Activated B cell treated with CpG ODN at 0.5 μM for 24 hours (primary cell): ENCODE measurements at regions of chr7 and their contacts with region 1.

Region 1: GRCh38 chr7:106870983-106871410 is 5.9 kb downstream of the PIK3CG start:
- DNase-seq: no peak
- ATAC-seq: peak; percentile 77
- H3K4me3 Mint-ChIP-seq: peak overlapping the region; percentile 74
- H3K27ac Mint-ChIP-seq: peak overlapping the region; percentile 86
- H3K4me1 Mint-ChIP-seq: peaks cover 77% of the 10 kb centered on the region
- H3K27me3 Mint-ChIP-seq: no peaks in the 10 kb centered on the region
- CTCF ChIP-seq: no peak

Region 2: GRCh38 chr7:106717955-106718871 is 152.8 kb before region 1 on chr7:
- CTCF ChIA-PET with region 1: no interaction called
- POLR2A ChIA-PET with region 1: interaction called, 3 read pairs
- intact Hi-C with region 1: loop called (anchors 5 kb)
- DNase-seq: no peak
- ATAC-seq: peak; percentile 88
- H3K4me3 Mint-ChIP-seq: no peak overlapping the region
- H3K27ac Mint-ChIP-seq: no peak overlapping the region
- H3K4me1 Mint-ChIP-seq: peaks cover 12% of the 10 kb centered on the region
- H3K27me3 Mint-ChIP-seq: no peaks in the 10 kb centered on the region
- CTCF ChIP-seq: no peak

Region 3: DNA sequence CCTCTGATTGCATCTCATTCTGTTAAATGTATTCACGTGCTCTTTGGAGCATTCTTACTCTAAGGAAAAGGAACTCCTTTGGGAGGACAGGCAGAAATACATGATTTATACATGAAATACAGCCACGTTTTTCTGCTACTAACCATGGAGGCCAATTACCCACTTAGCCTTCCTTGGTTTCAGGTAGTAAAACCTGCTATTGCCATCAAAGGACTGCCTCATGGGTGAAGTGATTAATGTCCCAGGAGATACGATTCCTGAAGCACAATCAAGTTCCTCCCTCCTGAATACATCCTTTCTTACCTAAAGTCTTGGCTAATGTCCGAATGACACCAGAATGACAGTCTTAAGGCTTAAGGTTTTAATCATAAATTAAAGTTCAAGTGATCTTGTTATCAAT is 64.4 kb before region 1 on chr7:
- CTCF ChIA-PET with region 1: no interaction called
- POLR2A ChIA-PET with region 1: no interaction called
- intact Hi-C with region 1: no loop called
- DNase-seq: no peak
- ATAC-seq: no peak
- H3K4me3 Mint-ChIP-seq: no peak overlapping the region
- H3K27ac Mint-ChIP-seq: no peak overlapping the region
- H3K4me1 Mint-ChIP-seq: peaks cover 4% of the 10 kb centered on the region
- H3K27me3 Mint-ChIP-seq: no peaks in the 10 kb centered on the region
- CTCF ChIP-seq: no peak

Region 4: GRCh38 chr7:106855540-106856132 is 15.4 kb before region 1 on chr7:
- CTCF ChIA-PET with region 1: no interaction called
- POLR2A ChIA-PET with region 1: interaction called, 8 read pairs
- intact Hi-C with region 1: loop called (anchors 2 kb)
- DNase-seq: no peak
- ATAC-seq: peak; percentile 89
- H3K4me3 Mint-ChIP-seq: no peak overlapping the region
- H3K27ac Mint-ChIP-seq: peak overlapping the region; percentile 6
- H3K4me1 Mint-ChIP-seq: peaks cover 10% of the 10 kb centered on the region
- H3K27me3 Mint-ChIP-seq: no peaks in the 10 kb centered on the region
- CTCF ChIP-seq: no peak

Region 5: GRCh38 chr7:106883456-106884026 is 12.5 kb after region 1 on chr7:
- CTCF ChIA-PET with region 1: interaction called, 3 read pairs
- POLR2A ChIA-PET with region 1: interaction called, 14 read pairs
- intact Hi-C with region 1: loop called (anchors 1 kb)
- DNase-seq: no peak
- ATAC-seq: peak; percentile 95
- H3K4me3 Mint-ChIP-seq: peak overlapping the region; percentile 58
- H3K27ac Mint-ChIP-seq: peak overlapping the region; percentile 61
- H3K4me1 Mint-ChIP-seq: peaks cover 45% of the 10 kb centered on the region
- H3K27me3 Mint-ChIP-seq: no peaks in the 10 kb centered on the region
- CTCF ChIP-seq: no peak

Region 6: DNA sequence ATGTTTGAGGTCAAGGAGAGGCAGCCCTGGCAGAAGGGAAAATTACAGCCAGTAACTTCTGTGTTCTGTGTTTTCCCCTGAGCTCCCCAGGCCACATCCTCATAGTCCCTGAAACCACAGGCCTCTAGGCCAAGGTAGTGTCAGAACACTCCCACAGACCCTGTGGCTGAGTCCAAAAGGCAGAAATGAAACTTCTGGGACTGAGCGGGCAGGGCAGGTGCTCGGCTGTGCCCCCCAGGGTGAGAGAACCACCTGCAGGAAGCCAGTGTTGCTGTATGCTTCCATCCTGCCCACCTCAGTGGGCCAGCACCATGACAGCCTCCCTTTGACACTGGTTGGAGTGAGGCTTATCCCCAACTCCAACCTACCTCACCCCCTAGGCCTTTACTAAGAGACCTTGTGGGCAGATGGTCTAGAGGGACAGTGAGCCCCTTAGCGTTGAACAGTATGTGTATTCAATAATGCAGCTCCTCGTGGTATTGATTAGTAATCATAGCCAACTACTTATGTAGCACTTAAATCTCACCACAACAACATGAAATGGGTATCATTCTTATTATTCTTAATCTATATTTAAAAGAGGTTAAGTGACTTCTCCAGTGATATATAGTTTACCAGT is 24.4 kb after region 1 on chr7:
- CTCF ChIA-PET with region 1: no interaction called
- POLR2A ChIA-PET with region 1: interaction called, 15 read pairs
- intact Hi-C with region 1: loop called (anchors 1 kb)
- DNase-seq: peak; percentile 42
- ATAC-seq: peak; percentile 93
- H3K4me3 Mint-ChIP-seq: peak overlapping the region; percentile 46
- H3K27ac Mint-ChIP-seq: peak overlapping the region; percentile 82
- H3K4me1 Mint-ChIP-seq: peaks cover 77% of the 10 kb centered on the region
- H3K27me3 Mint-ChIP-seq: no peaks in the 10 kb centered on the region
- CTCF ChIP-seq: no peak

Region 7: GRCh38 chr7:107025449-107026103 is 154.6 kb after region 1 on chr7:
- CTCF ChIA-PET with region 1: no interaction called
- POLR2A ChIA-PET with region 1: no interaction called
- intact Hi-C with region 1: no loop called
- DNase-seq: no peak
- ATAC-seq: no peak
- H3K4me3 Mint-ChIP-seq: no peak overlapping the region
- H3K27ac Mint-ChIP-seq: no peak overlapping the region
- H3K4me1 Mint-ChIP-seq: peaks cover 11% of the 10 kb centered on the region
- H3K27me3 Mint-ChIP-seq: peaks cover 5% of the 10 kb centered on the region
- CTCF ChIP-seq: no peak